Common myeloid progenitor, CD34-positive (primary cell): ENCODE measurements at regions of chr5 and their contacts with region 1.

Region 1: DNA sequence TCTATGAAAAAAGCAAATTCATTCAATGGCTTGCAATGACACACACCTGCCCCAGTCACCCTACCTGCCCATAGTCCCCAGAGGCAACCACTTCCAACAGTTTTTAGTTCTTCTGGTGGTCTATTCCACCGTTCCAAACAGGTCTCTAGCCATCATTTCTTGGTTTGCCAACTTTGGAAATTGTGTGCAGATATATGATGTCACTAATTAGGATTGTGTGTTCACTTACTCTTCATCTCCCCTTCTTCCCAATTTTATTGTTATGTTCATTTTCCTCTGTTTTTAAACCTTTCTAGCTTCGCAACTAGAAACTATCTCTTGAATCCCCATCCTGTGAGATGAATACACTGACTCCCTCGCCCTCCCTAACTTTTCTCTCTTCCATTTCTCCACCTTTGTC is 7.2 kb downstream of the RNF130 start:
- DNase-seq: no peak
- H3K4me3 ChIP-seq: no peak overlapping the region
- H3K27ac ChIP-seq: no peak overlapping the region
- H3K4me1 ChIP-seq: peaks cover 6 to 26% (median 20%) of the 10 kb centered on the region in 4 experiments
- H3K27me3 ChIP-seq: no peaks in the 10 kb centered on the region

Region 2: GRCh38 chr5:179978792-179979191 is 85.6 kb before region 1 on chr5:
- CTCF ChIA-PET with region 1: no interaction called
- POLR2A ChIA-PET with region 1: no interaction called
- DNase-seq: peak in 2 of 3 donors; percentile 35 to 54
- H3K4me3 ChIP-seq: no peak overlapping the region
- H3K27ac ChIP-seq: peak overlapping the region; percentile 4 to 47
- H3K4me1 ChIP-seq: peaks cover 0 to 8% (median 0%) of the 10 kb centered on the region in 4 experiments
- H3K27me3 ChIP-seq: no peaks in the 10 kb centered on the region

Region 3: GRCh38 chr5:180053061-180053602 is 11.2 kb before region 1 on chr5:
- CTCF ChIA-PET with region 1: interaction called, 14 read pairs
- POLR2A ChIA-PET with region 1: interaction called, 6 read pairs
- DNase-seq: no peak
- H3K4me3 ChIP-seq: no peak overlapping the region
- H3K27ac ChIP-seq: no peak overlapping the region
- H3K4me1 ChIP-seq: peaks cover 14 to 37% (median 27%) of the 10 kb centered on the region in 4 experiments
- H3K27me3 ChIP-seq: no peaks in the 10 kb centered on the region